Gastrocnemius medialis (tissue), 4 donors: ENCODE measurements at regions of chr16 and their contacts with region 1.

Region 1: DNA sequence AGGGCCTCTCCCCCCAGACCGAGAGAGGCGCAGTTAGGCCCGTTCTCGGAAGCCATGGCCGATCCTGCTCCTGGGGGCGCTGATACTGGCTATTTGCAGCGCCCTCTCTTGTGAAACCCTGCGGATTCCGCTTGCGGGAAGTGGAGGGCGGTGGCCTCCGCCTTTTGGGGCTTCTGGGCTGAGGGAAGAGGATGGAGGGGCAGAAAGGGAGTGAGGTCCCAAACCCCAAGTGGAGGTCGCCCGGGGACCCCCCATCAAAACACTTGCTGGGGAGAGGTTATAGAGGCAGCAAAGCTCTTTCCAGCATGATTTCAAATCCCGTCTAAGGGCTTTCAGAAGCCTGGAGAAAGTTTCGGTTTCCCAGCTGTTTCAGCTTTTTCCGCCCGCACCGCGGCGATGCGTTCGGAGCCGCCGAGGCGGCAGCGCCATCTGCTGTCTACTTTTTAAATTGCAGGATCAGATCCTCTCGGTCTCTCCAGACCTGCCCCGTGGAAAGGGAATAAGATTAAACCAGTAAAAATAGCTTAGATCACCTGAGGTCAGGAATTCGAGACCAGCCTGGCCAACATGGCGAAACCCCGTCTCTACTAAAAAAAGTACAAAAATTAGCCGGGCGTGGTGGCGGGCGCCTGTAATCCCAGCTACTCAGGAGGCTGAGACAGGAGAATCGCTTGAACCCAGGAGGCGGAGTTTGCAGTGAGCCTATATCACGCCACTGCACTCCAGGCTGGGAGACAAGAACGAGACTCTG is 15.8 kb downstream of the SNX20 start:
- DNase-seq: peak; percentile 47 to 55
- ATAC-seq: peak; percentile 64 to 75
- H3K4me3 ChIP-seq: peak overlapping the region; percentile 55 to 63 (median 56)
- H3K27ac ChIP-seq: peak overlapping the region in 3 of 4 donors; percentile 40 to 64 (median 55)
- H3K4me1 ChIP-seq: peaks cover 16 to 21% of the 10 kb centered on the region in 2 donors
- H3K27me3 ChIP-seq: no peaks in the 10 kb centered on the region
- CTCF ChIP-seq: peak; percentile 70 to 95 (median 81)
- POLR2A ChIP-seq: no peak

Region 2: GRCh38 chr16:50210266-50211038 is 454.9 kb before region 1 on chr16:
- in situ Hi-C with region 1: loop called (anchors 10 to 25 kb)
- intact Hi-C with region 1: loop called (anchors 1 kb)
- DNase-seq: peak; percentile 36 to 63
- ATAC-seq: peak; percentile 48 to 82
- H3K4me3 ChIP-seq: no peak overlapping the region
- H3K27ac ChIP-seq: peak overlapping the region; percentile 35 to 72 (median 50)
- H3K4me1 ChIP-seq: peaks cover 39 to 40% of the 10 kb centered on the region in 2 donors
- H3K27me3 ChIP-seq: no peaks in the 10 kb centered on the region
- CTCF ChIP-seq: peak; percentile 15 to 58 (median 39)
- POLR2A ChIP-seq: no peak

Region 3: GRCh38 chr16:50368410-50369132 is 296.7 kb before region 1 on chr16 and contains the start of gene BRD7:
- in situ Hi-C with region 1: loop called in 3 of 4 experiments (anchors 5 to 10 kb)
- intact Hi-C with region 1: loop called (anchors 5 kb)
- DNase-seq: peak; percentile 17 to 50
- ATAC-seq: peak; percentile 92 to 94
- H3K4me3 ChIP-seq: peak within 1 kb of the TSS; percentile 67 to 98 (median 82)
- H3K27ac ChIP-seq: peak within 1 kb of the TSS; percentile 65 to 83 (median 76)
- H3K4me1 ChIP-seq: peaks cover 20 to 44% of the 10 kb centered on the region in 2 donors
- H3K27me3 ChIP-seq: no peaks in the 10 kb centered on the region
- CTCF ChIP-seq: peak in 4 of 5 experiments; percentile 35 to 83 (median 58)
- POLR2A ChIP-seq: peak in 1 of 2 donors; percentile 39
- total RNA-seq, gene BRD7: 38.3 to 55.9 (median 48.8) TPM

Region 4: GRCh38 chr16:50593410-50594150 is 71.7 kb before region 1 on chr16:
- in situ Hi-C with region 1: no loop called
- intact Hi-C with region 1: loop called (anchors 5 kb)
- DNase-seq: no peak
- ATAC-seq: no peak
- H3K4me3 ChIP-seq: no peak overlapping the region
- H3K27ac ChIP-seq: no peak overlapping the region
- H3K4me1 ChIP-seq: peaks cover 0 to 3% of the 10 kb centered on the region in 2 donors
- H3K27me3 ChIP-seq: no peaks in the 10 kb centered on the region
- CTCF ChIP-seq: peak in 1 of 5 experiments; percentile 17
- POLR2A ChIP-seq: no peak

Region 5: GRCh38 chr16:50611332-50611934 is 53.9 kb before region 1 on chr16:
- in situ Hi-C with region 1: no loop called
- intact Hi-C with region 1: no loop called
- DNase-seq: no peak
- ATAC-seq: no peak
- H3K4me3 ChIP-seq: no peak overlapping the region
- H3K27ac ChIP-seq: no peak overlapping the region
- H3K4me1 ChIP-seq: peaks cover 0 to 12% of the 10 kb centered on the region in 2 donors
- H3K27me3 ChIP-seq: no peaks in the 10 kb centered on the region
- CTCF ChIP-seq: no peak
- POLR2A ChIP-seq: no peak

Region 6: GRCh38 chr16:50696575-50697420 is 31.5 kb after region 1 on chr16:
- in situ Hi-C with region 1: no loop called
- intact Hi-C with region 1: no loop called
- DNase-seq: peak; percentile 55 to 74
- ATAC-seq: no peak
- H3K4me3 ChIP-seq: no peak overlapping the region
- H3K27ac ChIP-seq: peak overlapping the region; percentile 81 to 87 (median 85)
- H3K4me1 ChIP-seq: peaks cover 37 to 46% of the 10 kb centered on the region in 2 donors
- H3K27me3 ChIP-seq: no peaks in the 10 kb centered on the region
- CTCF ChIP-seq: no peak
- POLR2A ChIP-seq: peak; percentile 23 to 35

Region 7: DNA sequence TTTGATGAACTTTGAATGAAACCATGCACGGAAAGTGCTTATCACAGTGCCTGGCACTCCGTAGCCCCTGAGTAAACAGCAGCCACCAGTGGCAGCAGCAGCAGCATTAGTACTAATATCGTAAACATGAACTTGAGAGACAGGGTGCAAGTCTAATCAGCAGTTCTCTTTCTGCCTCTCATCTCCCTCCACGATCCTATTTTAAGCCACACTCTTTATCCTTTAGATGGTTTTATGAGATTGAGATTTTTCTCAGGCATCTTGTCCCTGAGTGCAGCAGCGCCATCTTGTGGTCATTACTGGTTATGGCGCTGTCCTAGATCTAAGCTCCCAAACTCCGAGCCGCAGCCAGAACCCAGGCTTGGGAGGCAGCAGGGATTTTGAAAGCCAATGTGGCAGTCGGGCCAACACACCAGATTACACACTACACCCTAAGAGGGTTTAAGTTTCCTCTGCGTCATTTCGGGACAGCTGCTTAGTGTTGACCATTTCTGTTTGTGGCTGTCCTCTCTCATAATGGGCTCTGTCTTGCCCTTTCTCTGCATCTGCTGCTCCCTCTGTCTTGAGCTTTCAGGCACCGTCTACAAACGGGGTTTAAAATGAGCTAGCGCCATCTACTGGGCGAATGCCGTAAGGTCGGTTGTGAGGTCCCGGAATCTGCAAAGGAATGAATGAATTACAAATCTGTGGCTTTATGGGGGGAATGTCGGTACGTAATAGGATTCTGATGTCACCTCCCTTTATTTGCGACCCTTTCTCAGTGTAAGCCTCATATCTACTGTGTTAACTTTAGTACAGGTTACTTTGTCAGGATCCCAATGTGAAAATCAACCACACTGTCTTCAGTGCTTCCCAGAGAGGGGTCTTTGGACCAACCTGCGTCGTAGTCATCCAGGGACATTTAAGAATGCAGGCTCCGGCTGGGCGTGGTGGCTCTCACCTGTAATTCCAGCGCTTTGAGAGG is 141.1 kb after region 1 on chr16:
- in situ Hi-C with region 1: loop called in 2 of 4 experiments (anchors 10 kb)
- intact Hi-C with region 1: loop called (anchors 2 kb)
- DNase-seq: peak; percentile 67 to 82
- ATAC-seq: peak; percentile 96 to 98
- H3K4me3 ChIP-seq: peak overlapping the region; percentile 17 to 60 (median 28)
- H3K27ac ChIP-seq: peak overlapping the region; percentile 54 to 81 (median 64)
- H3K4me1 ChIP-seq: peaks cover 3 to 4% of the 10 kb centered on the region in 2 donors
- H3K27me3 ChIP-seq: no peaks in the 10 kb centered on the region
- CTCF ChIP-seq: peak; percentile 87 to 94 (median 92)
- POLR2A ChIP-seq: no peak

Region 8: DNA sequence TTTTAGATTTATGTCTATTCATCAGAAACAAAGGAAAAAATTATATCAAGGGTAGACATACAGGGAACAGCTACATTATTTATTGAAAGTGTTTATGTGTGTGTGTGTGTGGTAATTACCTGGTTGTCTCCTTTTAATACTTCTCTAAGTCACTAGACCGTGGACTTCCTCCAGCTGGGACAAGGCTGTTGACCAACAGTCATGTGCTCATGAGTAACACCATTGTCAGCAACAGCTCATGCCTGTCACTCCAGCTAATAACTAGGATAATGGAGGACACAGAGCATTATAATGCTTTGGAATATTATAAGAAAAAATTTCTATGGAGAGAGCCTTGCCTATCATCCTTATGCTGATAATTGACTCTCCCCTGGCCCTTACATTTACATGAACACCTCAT is 611.0 kb after region 1 on chr16:
- in situ Hi-C with region 1: no loop called
- intact Hi-C with region 1: no loop called
- DNase-seq: no peak
- ATAC-seq: no peak
- H3K4me3 ChIP-seq: no peak overlapping the region
- H3K27ac ChIP-seq: no peak overlapping the region
- H3K4me1 ChIP-seq: no peaks in the 10 kb centered on the region
- H3K27me3 ChIP-seq: no peaks in the 10 kb centered on the region
- CTCF ChIP-seq: no peak
- POLR2A ChIP-seq: no peak